ENCODE measurements at regions of chr2 and their contacts with region 1.

Region 1: GRCh38 chr2:66344087-66344663 is 90.8 kb upstream of the MEIS1 start:
- DNase-seq: no peak
- ATAC-seq: no peak
- H3K4me3 Mint-ChIP-seq: no peak overlapping the region
- H3K27ac Mint-ChIP-seq: no peak overlapping the region
- H3K4me1 Mint-ChIP-seq: no peaks in the 10 kb centered on the region
- H3K27me3 Mint-ChIP-seq: no peaks in the 10 kb centered on the region

Region 2: DNA sequence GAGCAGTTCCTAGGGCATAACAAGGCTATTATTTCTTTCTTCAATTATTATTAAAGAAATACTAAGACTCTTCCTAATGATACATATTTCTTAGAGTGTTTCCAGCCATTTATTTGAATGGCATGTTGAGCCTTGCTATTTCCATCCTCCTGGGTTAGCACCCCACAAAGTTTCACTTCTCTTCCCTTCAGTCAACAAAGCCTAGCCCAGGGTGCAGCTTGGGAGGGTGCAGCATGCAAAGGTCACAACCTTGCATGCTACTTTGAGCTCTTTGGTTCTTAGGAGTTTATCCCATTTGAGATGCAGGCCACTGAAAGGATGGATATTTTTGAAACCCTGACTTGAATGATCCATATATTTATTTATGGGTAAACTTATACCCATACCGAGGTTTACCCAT is 363.6 kb before region 1 on chr2:
- CTCF ChIA-PET with region 1: no interaction called
- POLR2A ChIA-PET with region 1: no interaction called
- intact Hi-C with region 1: loop called in 1 of 2 experiments (anchors 5 kb)
- DNase-seq: no peak
- ATAC-seq: no peak
- H3K4me3 Mint-ChIP-seq: no peak overlapping the region
- H3K27ac Mint-ChIP-seq: no peak overlapping the region
- H3K4me1 Mint-ChIP-seq: no peaks in the 10 kb centered on the region
- H3K27me3 Mint-ChIP-seq: no peaks in the 10 kb centered on the region